ENCODE measurements at regions of chr1 and their contacts with region 1.

Region 1: GRCh38 chr1:52702886-52703787 is 5.0 kb upstream of the COA7 start:
- DNase-seq: peak; percentile 93
- ATAC-seq: peak; percentile 86
- H3K4me3 ChIP-seq: peak overlapping the region in 4 of 5 experiments; percentile 37 to 57 (median 49)
- H3K4me3 Mint-ChIP-seq: peak overlapping the region; percentile 90
- H3K27ac ChIP-seq: peak overlapping the region; percentile 83 to 88
- H3K27ac Mint-ChIP-seq: peak overlapping the region; percentile 97
- H3K4me1 ChIP-seq: peaks cover 8 to 21% of the 10 kb centered on the region in 2 donors
- H3K4me1 Mint-ChIP-seq: peaks cover 24% of the 10 kb centered on the region
- H3K27me3 ChIP-seq: no peaks in the 10 kb centered on the region
- H3K27me3 Mint-ChIP-seq: peaks cover under 1% of the 10 kb centered on the region
- CTCF ChIP-seq: no peak

Region 2: DNA sequence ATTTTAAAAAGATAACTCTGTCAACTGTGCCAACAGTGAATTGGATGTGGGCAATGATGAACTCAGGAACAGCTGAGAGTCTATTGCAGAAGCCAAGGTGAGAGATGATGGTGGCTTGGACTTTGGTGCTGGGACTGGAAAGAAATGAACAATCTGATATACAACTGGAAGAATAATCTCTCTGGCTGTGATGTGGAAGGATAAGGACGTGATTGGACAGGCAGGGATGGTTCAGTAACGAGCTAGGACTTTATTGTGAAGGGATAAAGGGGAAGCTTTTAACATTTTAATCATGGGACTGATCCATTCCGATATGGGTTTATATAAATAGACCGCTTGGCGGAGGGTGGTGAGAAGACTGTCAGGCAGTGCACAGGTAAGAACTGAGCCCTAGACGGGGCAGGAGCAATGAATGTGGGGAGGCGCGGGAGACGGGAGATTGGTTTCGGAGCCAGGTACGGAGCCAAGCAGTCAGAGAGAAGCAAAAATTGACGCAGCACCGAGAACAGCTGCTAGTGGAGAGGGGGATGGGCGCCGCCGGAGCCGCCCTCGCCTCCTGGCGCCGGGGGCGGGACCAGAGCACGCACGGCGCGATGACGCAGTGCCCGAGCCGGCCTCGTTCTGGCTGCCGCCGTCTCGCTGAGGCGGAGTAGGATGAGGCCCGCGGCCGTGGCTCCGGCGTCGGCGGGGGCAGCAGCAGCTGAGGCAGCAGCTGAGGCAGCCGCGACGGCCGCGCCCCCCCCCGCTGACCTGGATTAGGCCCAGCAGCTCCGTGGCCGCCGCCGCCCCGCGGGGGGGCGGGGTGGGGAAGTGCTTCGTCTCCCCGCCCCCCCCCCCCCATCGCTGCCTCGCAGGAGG is 1467.2 kb before region 1 on chr1 and contains the start of gene RNF11:
- CTCF ChIA-PET with region 1: no interaction called
- POLR2A ChIA-PET with region 1: no interaction called
- intact Hi-C with region 1: loop called (anchors 10 kb)
- DNase-seq: peak; percentile 95
- ATAC-seq: peak; percentile 73
- H3K4me3 ChIP-seq: peak within 1 kb of the TSS; percentile 69 to 96 (median 86)
- H3K4me3 Mint-ChIP-seq: peak within 1 kb of the TSS; percentile 94
- H3K27ac ChIP-seq: peak within 1 kb of the TSS; percentile 58 to 80
- H3K27ac Mint-ChIP-seq: peak within 1 kb of the TSS; percentile 94
- H3K4me1 ChIP-seq: peaks cover 29 to 39% of the 10 kb centered on the region in 2 donors
- H3K4me1 Mint-ChIP-seq: peaks cover 34% of the 10 kb centered on the region
- H3K27me3 ChIP-seq: peaks cover 0 to 6% (median 1%) of the 10 kb centered on the region in 4 experiments
- H3K27me3 Mint-ChIP-seq: peaks cover 8% of the 10 kb centered on the region
- CTCF ChIP-seq: no peak
- total RNA-seq, gene RNF11: 17.6 and 20.6 TPM in 2 replicates

Region 3: GRCh38 chr1:52571783-52572182 is 131.4 kb before region 1 on chr1:
- CTCF ChIA-PET with region 1: no interaction called
- POLR2A ChIA-PET with region 1: no interaction called
- intact Hi-C with region 1: no loop called
- DNase-seq: no peak
- ATAC-seq: no peak
- H3K4me3 ChIP-seq: no peak overlapping the region
- H3K4me3 Mint-ChIP-seq: no peak overlapping the region
- H3K27ac ChIP-seq: no peak overlapping the region
- H3K27ac Mint-ChIP-seq: no peak overlapping the region
- H3K4me1 ChIP-seq: peaks cover 19 to 22% of the 10 kb centered on the region in 2 donors
- H3K4me1 Mint-ChIP-seq: peaks cover 23% of the 10 kb centered on the region
- H3K27me3 ChIP-seq: no peaks in the 10 kb centered on the region
- H3K27me3 Mint-ChIP-seq: no peaks in the 10 kb centered on the region
- CTCF ChIP-seq: no peak

Region 4: GRCh38 chr1:52748119-52748518 is 45.0 kb after region 1 on chr1:
- CTCF ChIA-PET with region 1: interaction called, 9 read pairs
- POLR2A ChIA-PET with region 1: no interaction called
- intact Hi-C with region 1: loop called (anchors 1 kb)
- DNase-seq: no peak
- ATAC-seq: no peak
- H3K4me3 ChIP-seq: no peak overlapping the region
- H3K4me3 Mint-ChIP-seq: no peak overlapping the region
- H3K27ac ChIP-seq: no peak overlapping the region
- H3K27ac Mint-ChIP-seq: no peak overlapping the region
- H3K4me1 ChIP-seq: no peaks in the 10 kb centered on the region
- H3K4me1 Mint-ChIP-seq: peaks cover 14% of the 10 kb centered on the region
- H3K27me3 ChIP-seq: no peaks in the 10 kb centered on the region
- H3K27me3 Mint-ChIP-seq: no peaks in the 10 kb centered on the region
- CTCF ChIP-seq: peak; percentile 27

Region 5: GRCh38 chr1:52970149-52970548 is 267.0 kb after region 1 on chr1:
- CTCF ChIA-PET with region 1: no interaction called
- POLR2A ChIA-PET with region 1: no interaction called
- intact Hi-C with region 1: loop called (anchors 5 kb)
- DNase-seq: peak; percentile 6
- ATAC-seq: no peak
- H3K4me3 ChIP-seq: no peak overlapping the region
- H3K4me3 Mint-ChIP-seq: no peak overlapping the region
- H3K27ac ChIP-seq: no peak overlapping the region
- H3K27ac Mint-ChIP-seq: no peak overlapping the region
- H3K4me1 ChIP-seq: no peaks in the 10 kb centered on the region
- H3K4me1 Mint-ChIP-seq: no peaks in the 10 kb centered on the region
- H3K27me3 ChIP-seq: no peaks in the 10 kb centered on the region
- H3K27me3 Mint-ChIP-seq: no peaks in the 10 kb centered on the region
- CTCF ChIP-seq: no peak

Region 6: GRCh38 chr1:53220171-53220961 is 517.2 kb after region 1 on chr1 and contains the start of gene CZIB:
- CTCF ChIA-PET with region 1: no interaction called
- POLR2A ChIA-PET with region 1: interaction called, 10 read pairs
- intact Hi-C with region 1: no loop called
- DNase-seq: peak; percentile 96
- ATAC-seq: peak; percentile 92
- H3K4me3 ChIP-seq: peak within 1 kb of the TSS; percentile 43 to 91 (median 66)
- H3K4me3 Mint-ChIP-seq: peak within 1 kb of the TSS; percentile 97
- H3K27ac ChIP-seq: peak within 1 kb of the TSS; percentile 85 to 87
- H3K27ac Mint-ChIP-seq: peak within 1 kb of the TSS; percentile 99
- H3K4me1 ChIP-seq: peaks cover 13 to 17% of the 10 kb centered on the region in 2 donors
- H3K4me1 Mint-ChIP-seq: peaks cover 20% of the 10 kb centered on the region
- H3K27me3 ChIP-seq: no peaks in the 10 kb centered on the region
- H3K27me3 Mint-ChIP-seq: no peaks in the 10 kb centered on the region
- CTCF ChIP-seq: no peak
- total RNA-seq, gene CZIB: 62.0 and 62.1 TPM in 2 replicates